CD4-positive, alpha-beta T cell (primary cell): ENCODE measurements at regions of chr20 and their contacts with region 1.

Region 1: DNA sequence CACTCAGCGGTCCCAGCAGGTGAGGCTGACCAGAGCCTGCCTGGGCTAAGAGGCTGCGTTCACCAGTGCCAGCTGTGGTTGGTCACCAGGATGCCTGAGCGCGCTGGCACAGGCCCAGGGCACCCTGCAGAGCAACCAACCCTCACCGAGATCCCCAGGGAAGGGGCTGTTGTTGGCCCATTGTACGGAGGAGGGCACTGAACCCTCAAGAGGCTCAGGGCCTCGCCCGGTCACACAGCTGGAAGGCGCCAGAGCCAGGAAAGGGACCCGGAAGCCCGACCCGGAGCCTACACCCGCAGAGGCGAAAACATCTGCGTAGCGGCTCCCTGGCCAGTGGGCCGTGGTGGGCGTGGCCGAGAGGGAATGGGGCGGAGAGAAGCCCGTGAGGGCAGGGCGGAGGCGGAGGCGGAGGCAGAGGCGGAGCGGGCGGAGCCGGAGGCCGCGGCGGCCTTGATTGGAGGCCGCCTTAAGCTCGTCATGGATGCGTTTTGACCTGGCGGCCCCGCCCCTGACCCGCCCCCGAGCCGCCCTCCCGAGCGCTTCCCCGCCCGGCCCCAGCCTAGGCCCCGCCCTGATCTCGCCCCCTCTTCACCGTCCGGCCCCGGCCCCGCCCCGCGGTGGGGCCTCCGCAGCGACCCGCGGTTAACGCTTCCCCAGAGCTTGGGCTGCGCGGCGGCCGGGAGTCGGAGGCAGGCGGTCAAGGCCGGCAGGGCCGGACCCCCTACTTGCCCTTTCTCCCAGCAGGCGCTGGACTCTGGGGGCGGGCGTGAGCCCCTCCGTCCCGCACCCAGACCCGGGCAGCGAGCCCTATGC is 2.2 kb upstream of the MRGBP start:
- DNase-seq: peak; percentile 87 to 98 (median 95)
- ATAC-seq: peak; percentile 71
- H3K4me3 ChIP-seq: peak overlapping the region; percentile 78
- H3K4me3 Mint-ChIP-seq: peak overlapping the region; percentile 88
- H3K27ac ChIP-seq: peak overlapping the region; percentile 79 to 90
- H3K27ac Mint-ChIP-seq: peak overlapping the region; percentile 89
- H3K4me1 ChIP-seq: peaks cover 56% of the 10 kb centered on the region
- H3K4me1 Mint-ChIP-seq: peaks cover 55% of the 10 kb centered on the region
- H3K27me3 ChIP-seq: no peaks in the 10 kb centered on the region
- H3K27me3 Mint-ChIP-seq: no peaks in the 10 kb centered on the region
- CTCF ChIP-seq: no peak

Region 2: DNA sequence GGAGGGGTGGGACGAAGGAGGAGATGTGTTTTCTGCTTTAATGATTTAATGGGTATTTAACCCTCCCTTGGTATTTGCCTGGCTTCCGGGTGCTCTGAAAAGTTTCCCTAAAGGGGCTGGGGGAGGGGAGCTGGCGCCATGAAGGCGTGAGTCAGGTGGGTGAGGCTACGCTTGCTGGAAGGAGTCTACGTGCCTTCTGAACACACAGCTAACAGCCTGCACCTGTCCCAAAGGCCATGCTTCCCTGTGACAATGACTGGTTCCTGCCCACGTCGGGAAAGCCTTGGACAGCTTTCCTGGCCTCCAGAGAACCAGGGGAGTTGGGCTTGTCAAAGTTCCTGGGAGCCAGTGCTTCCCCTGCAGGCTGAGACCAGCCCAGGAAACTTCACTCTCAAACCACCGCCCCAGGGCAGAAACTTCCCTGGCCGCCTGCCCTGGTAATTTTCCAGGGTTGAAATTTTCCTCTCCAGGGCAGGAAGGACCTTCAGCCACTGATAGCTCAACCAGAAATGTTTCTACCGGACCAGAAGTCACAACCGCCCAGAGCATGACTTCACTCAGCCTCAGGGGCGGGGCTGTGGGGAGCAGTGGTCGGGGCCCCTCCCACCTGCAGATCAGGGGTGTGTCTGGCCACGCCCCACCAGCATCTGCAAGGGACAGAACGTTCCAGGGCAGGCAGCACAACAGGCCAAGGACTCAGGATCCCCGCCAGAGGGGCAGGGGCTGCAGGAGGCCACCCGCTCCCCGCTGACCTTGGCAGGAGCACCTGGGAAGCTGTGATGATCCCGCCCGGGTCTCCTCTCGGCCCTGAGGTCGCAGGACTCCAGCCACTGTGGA is 170.4 kb before region 1 on chr20:
- CTCF ChIA-PET with region 1: no interaction called
- POLR2A ChIA-PET with region 1: interaction called, 10 read pairs
- intact Hi-C with region 1: no loop called
- DNase-seq: peak; percentile 66 to 89 (median 79)
- ATAC-seq: peak; percentile 93
- H3K4me3 ChIP-seq: peak overlapping the region; percentile 29
- H3K4me3 Mint-ChIP-seq: peak overlapping the region; percentile 75
- H3K27ac ChIP-seq: no peak overlapping the region
- H3K27ac Mint-ChIP-seq: peak overlapping the region; percentile 82
- H3K4me1 ChIP-seq: peaks cover 23% of the 10 kb centered on the region
- H3K4me1 Mint-ChIP-seq: peaks cover 12% of the 10 kb centered on the region
- H3K27me3 ChIP-seq: no peaks in the 10 kb centered on the region
- H3K27me3 Mint-ChIP-seq: no peaks in the 10 kb centered on the region
- CTCF ChIP-seq: no peak

Region 3: DNA sequence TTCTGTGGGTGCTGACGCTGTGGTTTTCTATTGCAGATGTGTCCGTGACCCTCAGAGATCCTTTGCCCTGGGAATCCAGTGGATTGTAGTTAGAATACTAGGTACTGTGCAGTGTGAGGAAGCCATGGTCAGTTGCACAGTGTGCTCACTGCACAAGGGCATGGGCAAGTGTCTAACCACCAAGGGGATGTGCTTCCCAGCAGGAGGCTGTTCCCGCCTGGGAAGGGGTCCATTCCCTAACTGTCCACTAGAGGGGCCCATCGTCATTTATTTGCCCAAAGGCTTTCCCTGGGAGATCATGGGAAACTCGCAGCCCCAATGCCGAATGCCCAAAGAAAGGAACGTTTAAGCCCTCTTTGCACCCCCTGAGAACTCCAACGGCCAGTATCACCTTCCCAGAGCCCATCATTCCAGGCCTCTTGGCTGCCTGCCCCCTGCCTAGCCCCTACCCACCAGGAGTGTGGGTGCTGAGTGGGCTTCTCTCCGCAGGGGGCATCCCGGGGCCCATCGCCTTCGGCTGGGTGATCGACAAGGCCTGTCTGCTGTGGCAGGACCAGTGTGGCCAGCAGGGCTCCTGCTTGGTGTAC is 125.6 kb before region 1 on chr20:
- CTCF ChIA-PET with region 1: no interaction called
- POLR2A ChIA-PET with region 1: interaction called, 4 read pairs
- intact Hi-C with region 1: loop called in 1 of 2 experiments (anchors 1 kb)
- DNase-seq: peak in 11 of 14 experiments; percentile 24 to 72 (median 42)
- ATAC-seq: peak; percentile 52
- H3K4me3 ChIP-seq: no peak overlapping the region
- H3K4me3 Mint-ChIP-seq: no peak overlapping the region
- H3K27ac ChIP-seq: no peak overlapping the region
- H3K27ac Mint-ChIP-seq: no peak overlapping the region
- H3K4me1 ChIP-seq: no peaks in the 10 kb centered on the region
- H3K4me1 Mint-ChIP-seq: no peaks in the 10 kb centered on the region
- H3K27me3 ChIP-seq: no peaks in the 10 kb centered on the region
- H3K27me3 Mint-ChIP-seq: no peaks in the 10 kb centered on the region
- CTCF ChIP-seq: peak; percentile 83

Region 4: DNA sequence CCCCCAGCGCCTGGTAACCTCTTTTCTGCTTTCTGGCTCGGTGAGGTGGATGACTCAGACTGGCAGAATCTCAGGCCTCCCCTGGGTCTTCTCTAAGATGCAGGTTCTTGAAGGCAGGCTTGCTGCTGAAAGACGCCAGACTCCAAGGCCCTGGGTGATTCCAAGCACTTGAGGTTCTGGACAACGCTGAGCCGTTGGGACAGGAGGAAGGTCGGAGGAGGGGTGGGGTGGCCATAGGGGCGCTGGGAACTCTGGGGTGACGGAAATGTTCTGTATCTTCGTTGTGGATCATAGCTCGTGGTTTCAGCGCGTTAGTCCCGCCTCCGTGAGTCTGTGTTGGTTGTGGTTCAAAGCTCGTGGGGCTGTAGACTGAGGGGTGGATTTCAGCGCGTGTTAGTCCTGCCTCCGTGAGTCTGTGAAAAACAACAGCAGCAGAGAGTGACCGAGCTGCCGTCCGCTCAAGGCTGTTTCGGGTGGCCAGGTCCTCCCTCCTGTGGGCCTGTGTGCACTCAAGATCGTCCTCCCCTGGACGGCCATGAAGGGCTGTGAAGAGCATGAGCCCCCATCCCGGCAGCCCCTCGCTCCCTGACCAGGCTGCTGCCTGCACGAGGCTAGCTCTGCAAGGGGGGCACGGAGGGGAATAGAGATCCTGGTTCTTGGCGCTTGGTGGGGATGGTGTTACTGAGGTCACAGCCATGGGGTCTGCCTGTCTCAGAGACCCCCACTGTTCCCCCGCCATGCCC is 77.7 kb before region 1 on chr20:
- CTCF ChIA-PET with region 1: interaction called, 3 read pairs
- POLR2A ChIA-PET with region 1: interaction called, 17 read pairs
- intact Hi-C with region 1: no loop called
- DNase-seq: peak; percentile 22 to 81 (median 51)
- ATAC-seq: peak; percentile 97
- H3K4me3 ChIP-seq: peak overlapping the region; percentile 19
- H3K4me3 Mint-ChIP-seq: peak overlapping the region; percentile 62
- H3K27ac ChIP-seq: peak overlapping the region; percentile 10 to 48
- H3K27ac Mint-ChIP-seq: peak overlapping the region; percentile 89
- H3K4me1 ChIP-seq: peaks cover 33% of the 10 kb centered on the region
- H3K4me1 Mint-ChIP-seq: peaks cover 35% of the 10 kb centered on the region
- H3K27me3 ChIP-seq: no peaks in the 10 kb centered on the region
- H3K27me3 Mint-ChIP-seq: no peaks in the 10 kb centered on the region
- CTCF ChIP-seq: no peak

Region 5: DNA sequence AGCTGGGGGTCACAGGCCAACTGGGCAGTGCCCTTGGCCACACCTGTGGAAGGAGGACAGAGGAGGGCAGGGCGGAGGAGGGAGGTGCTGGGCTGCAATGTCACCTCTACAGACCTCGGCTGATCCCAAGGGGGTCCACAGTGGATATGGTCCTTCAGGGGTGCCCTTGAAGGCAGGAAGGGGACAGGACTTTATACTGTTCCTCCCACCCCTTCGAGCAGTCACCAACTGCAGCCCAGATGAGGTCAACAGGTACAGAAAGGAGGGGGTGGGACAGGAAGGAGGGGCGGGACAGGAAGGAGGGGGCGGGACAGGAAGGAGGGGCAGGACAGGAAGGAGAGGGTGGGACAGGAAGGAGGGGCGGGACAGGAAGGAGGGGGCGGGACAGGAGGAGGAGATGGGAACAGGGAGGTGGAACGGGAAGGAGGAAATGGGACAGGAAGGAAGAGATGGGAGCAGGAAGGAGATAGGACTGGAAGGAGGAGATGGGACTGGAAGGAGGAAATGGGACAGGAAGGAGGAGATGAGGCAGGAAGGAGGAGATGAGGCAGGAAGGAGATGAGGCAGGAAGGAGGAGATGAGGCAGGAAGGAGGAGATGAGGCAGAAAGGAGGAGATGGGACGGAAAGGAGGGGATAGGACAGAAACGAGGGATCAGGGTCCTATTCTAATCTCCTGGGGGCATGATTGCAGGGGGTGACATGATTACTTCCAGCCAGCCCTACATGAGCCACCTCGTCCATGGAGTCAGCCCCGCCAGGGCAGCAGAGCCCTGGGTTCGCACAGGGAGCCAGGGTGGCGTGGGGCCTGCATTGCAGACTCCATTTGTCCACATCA is 17.2 kb before region 1 on chr20:
- CTCF ChIA-PET with region 1: no interaction called
- POLR2A ChIA-PET with region 1: interaction called, 12 read pairs
- intact Hi-C with region 1: loop called (anchors 1 to 2 kb)
- DNase-seq: peak; percentile 29 to 89 (median 66)
- ATAC-seq: peak; percentile 82
- H3K4me3 ChIP-seq: peak overlapping the region; percentile 23
- H3K4me3 Mint-ChIP-seq: peak overlapping the region; percentile 74
- H3K27ac ChIP-seq: peak overlapping the region; percentile 77 to 89
- H3K27ac Mint-ChIP-seq: peak overlapping the region; percentile 92
- H3K4me1 ChIP-seq: peaks cover 59% of the 10 kb centered on the region
- H3K4me1 Mint-ChIP-seq: peaks cover 58% of the 10 kb centered on the region
- H3K27me3 ChIP-seq: no peaks in the 10 kb centered on the region
- H3K27me3 Mint-ChIP-seq: no peaks in the 10 kb centered on the region
- CTCF ChIP-seq: no peak

Region 6: GRCh38 chr20:62815066-62815991 is 21.2 kb after region 1 on chr20:
- CTCF ChIA-PET with region 1: no interaction called
- POLR2A ChIA-PET with region 1: interaction called, 10 read pairs
- intact Hi-C with region 1: no loop called
- DNase-seq: no peak
- ATAC-seq: no peak
- H3K4me3 ChIP-seq: no peak overlapping the region
- H3K4me3 Mint-ChIP-seq: peak overlapping the region; percentile 42
- H3K27ac ChIP-seq: no peak overlapping the region
- H3K27ac Mint-ChIP-seq: peak overlapping the region; percentile 27
- H3K4me1 ChIP-seq: peaks cover 26% of the 10 kb centered on the region
- H3K4me1 Mint-ChIP-seq: peaks cover 12% of the 10 kb centered on the region
- H3K27me3 ChIP-seq: peaks cover 44 to 47% of the 10 kb centered on the region in 2 experiments
- H3K27me3 Mint-ChIP-seq: peaks cover 23% of the 10 kb centered on the region
- CTCF ChIP-seq: no peak

Region 7: GRCh38 chr20:62872184-62872847 is 78.2 kb after region 1 on chr20:
- CTCF ChIA-PET with region 1: no interaction called
- POLR2A ChIA-PET with region 1: no interaction called
- intact Hi-C with region 1: no loop called
- DNase-seq: no peak
- ATAC-seq: no peak
- H3K4me3 ChIP-seq: no peak overlapping the region
- H3K4me3 Mint-ChIP-seq: no peak overlapping the region
- H3K27ac ChIP-seq: no peak overlapping the region
- H3K27ac Mint-ChIP-seq: no peak overlapping the region
- H3K4me1 ChIP-seq: peaks cover 30% of the 10 kb centered on the region
- H3K4me1 Mint-ChIP-seq: peaks cover 24% of the 10 kb centered on the region
- H3K27me3 ChIP-seq: peaks cover 0 to 5% of the 10 kb centered on the region in 2 experiments
- H3K27me3 Mint-ChIP-seq: no peaks in the 10 kb centered on the region
- CTCF ChIP-seq: no peak